ENCODE measurements at regions of chr20 and their contacts with region 1.

Region 1: DNA sequence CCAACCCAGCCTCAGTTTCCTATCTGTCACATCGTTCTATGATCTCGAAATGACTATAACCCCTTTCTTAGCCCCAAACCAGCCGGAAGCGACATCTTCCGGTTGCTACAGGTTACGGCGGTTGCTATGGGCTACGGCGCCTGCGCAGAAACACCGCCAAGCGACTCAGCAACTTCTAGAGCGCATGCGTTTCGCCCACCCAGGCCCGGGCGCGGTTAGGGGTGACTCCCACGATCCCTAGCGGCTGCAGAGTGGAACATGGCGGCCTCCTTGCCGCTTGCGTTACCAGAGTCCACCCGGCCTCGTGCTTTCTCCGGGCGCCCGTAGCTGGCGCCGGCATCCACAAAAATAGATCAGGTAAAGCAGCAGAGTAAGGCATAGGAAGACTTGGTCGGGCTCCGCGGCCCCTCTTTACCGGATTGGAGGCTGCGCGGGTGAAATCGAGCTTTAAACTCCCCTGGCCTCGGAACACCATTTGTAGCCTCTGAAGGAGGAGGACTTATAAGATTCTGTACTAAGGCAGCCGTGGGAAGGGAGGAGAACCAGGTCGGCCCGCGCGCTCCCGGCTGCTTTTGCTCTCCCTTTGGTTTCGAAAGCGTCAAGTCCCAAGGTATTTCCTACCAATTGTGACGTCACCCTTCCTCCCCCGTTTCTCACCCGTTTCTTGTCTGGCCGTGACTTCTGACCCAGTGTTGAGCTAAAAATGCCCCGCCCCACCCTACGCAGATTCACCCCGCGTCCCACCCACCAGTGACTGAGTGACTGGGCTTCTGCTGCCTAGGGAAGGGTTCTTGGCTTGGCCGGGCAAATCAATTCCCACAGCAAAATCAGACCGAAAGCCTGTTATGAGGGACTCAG is 3.5 kb downstream of the SDCBP2 start:
- DNase-seq: peak; percentile 97 to 99 (median 97)
- ATAC-seq: peak; percentile 73
- H3K4me3 ChIP-seq: peak overlapping the region; percentile 60
- H3K4me1 ChIP-seq: peaks cover 35% of the 10 kb centered on the region
- CTCF ChIP-seq: no peak

Region 2: DNA sequence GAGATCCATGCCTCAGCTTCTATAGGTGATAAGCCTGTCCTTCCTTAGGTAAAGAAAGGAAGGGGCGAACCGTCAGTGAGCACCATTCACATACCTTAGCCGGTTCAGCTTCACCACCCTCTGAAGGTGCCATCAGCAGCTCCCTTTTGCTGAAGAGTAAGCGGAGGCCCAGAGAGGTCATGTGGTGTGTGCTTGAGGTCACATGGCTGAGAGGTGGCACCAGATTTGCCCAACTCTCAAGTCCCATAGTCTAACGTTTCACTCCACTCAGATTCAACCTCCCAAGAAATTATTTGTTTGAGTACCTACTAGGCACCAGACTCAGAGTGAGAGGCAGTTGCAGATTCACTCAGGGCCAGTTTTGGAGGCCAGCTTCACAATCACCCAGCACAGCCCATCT is 304.8 kb before region 1 on chr20:
- intact Hi-C with region 1: no loop called
- DNase-seq: no peak
- ATAC-seq: no peak
- H3K4me3 ChIP-seq: no peak overlapping the region
- H3K4me1 ChIP-seq: no peaks in the 10 kb centered on the region
- CTCF ChIP-seq: no peak

Region 3: GRCh38 chr20:1171461-1172093 is 153.8 kb before region 1 on chr20:
- intact Hi-C with region 1: no loop called
- DNase-seq: peak in 2 of 3 donors; percentile 41 to 43
- ATAC-seq: peak; percentile 49
- H3K4me3 ChIP-seq: no peak overlapping the region
- H3K4me1 ChIP-seq: no peaks in the 10 kb centered on the region
- CTCF ChIP-seq: no peak

Region 4: GRCh38 chr20:1225783-1226654 is 99.4 kb before region 1 on chr20 and contains the start of gene RAD21L1:
- intact Hi-C with region 1: no loop called
- DNase-seq: peak; percentile 61 to 84 (median 82)
- ATAC-seq: peak; percentile 99
- H3K4me3 ChIP-seq: peak within 1 kb of the TSS; percentile 11
- H3K4me1 ChIP-seq: peaks cover 15% of the 10 kb centered on the region
- CTCF ChIP-seq: no peak
- total RNA-seq, gene RAD21L1: not detected

Region 5: DNA sequence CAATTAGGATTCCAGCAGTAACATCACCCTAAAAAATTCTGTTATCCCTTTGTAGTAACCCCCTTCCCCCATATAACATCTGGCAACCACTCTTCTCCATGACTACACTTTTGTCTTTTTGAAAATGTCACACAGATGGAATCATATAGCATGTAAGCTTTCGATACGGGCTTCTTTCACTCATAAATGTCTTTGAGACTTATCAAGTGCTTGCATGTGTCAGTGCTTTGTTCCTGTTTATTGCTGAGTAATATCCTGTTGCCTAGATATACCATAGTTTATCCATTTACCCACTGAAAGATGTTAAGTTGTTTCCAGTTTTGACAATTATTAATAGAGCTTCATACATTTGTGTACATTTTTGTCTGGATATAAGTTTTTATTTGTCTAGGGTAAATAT is 69.7 kb before region 1 on chr20:
- intact Hi-C with region 1: no loop called
- DNase-seq: no peak
- ATAC-seq: no peak
- H3K4me3 ChIP-seq: no peak overlapping the region
- H3K4me1 ChIP-seq: no peaks in the 10 kb centered on the region
- CTCF ChIP-seq: no peak

Region 6: GRCh38 chr20:1375515-1375914 is 50.1 kb after region 1 on chr20:
- intact Hi-C with region 1: loop called in 1 of 2 experiments (anchors 5 kb)
- DNase-seq: peak in 1 of 3 donors; percentile 1
- ATAC-seq: peak; percentile 20
- H3K4me3 ChIP-seq: no peak overlapping the region
- H3K4me1 ChIP-seq: peaks cover 17% of the 10 kb centered on the region
- CTCF ChIP-seq: no peak